ENCODE measurements at regions of chr6 and their contacts with region 1.

Region 1: DNA sequence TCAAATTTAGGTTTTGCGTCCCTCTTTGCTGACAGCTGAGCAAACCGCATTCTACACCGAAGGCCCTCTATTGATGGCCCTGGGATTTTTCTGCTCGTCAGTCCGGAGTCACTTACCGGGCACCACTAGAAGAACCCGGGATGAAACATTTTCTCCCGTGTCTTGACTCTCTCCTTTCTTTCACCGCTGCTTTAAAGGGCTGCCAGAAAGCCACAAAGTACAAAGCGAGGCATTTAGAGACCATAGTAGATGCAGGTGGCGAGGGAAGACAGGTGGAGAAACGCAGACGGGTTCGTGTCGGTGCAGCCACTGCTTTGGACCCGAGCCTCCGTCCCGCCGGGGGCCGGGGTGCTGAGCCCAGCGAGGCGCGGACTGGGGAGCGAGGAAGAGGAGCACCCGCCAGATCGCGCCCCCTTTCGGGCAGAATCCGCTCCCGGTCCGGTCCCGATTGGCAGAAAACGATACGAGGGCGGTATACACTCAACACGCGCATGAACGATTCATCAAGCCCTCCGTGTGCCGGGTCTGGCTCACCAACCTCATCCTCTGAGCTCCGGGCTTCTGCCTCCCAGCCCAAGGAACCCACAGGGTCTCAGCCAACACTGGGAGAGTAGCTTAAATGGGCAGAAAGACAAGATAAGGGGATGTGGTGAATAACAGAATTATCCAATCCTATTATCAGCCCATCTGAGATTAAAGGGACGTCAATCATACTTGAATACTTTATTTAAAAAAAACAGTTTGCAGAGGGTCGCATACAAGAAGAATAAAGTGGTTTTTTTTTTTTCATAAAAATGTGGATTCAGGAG is 84.9 kb downstream of the TRIM27 start:
- DNase-seq: peak; percentile 73 to 96 (median 88)

Region 2: DNA sequence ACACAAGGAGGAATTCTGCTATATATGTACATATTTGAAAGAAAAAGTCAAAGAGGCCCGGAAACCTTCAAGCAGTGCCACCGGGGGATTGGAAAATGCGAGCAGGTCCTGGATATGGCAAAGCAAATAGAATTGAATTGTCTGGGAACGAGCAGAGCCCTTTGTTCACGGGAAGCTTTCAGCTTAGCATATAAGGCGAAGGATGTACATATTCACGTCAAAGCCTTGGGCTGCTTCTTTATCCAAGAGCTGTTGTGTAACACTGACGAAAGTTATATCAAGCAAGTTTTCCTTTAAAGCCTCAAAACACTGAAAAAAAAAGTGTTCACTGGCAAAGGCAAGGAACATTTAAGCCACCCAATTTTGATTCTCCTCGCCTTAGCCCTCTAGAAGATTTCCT is 142.2 kb before region 1 on chr6:
- intact Hi-C with region 1: no loop called
- DNase-seq: no peak

Region 3: GRCh38 chr6:28863604-28864320 is 24.9 kb after region 1 on chr6:
- intact Hi-C with region 1: loop called (anchors 2 kb)
- DNase-seq: peak; percentile 59 to 93 (median 84)

Region 4: GRCh38 chr6:28940858-28941680 is 102.2 kb after region 1 on chr6:
- intact Hi-C with region 1: loop called (anchors 5 kb)
- DNase-seq: peak; percentile 49 to 94 (median 77)

Region 5: GRCh38 chr6:28981833-28982475 is 143.1 kb after region 1 on chr6:
- intact Hi-C with region 1: loop called (anchors 2 kb)
- DNase-seq: peak; percentile 21 to 91 (median 73)

Region 6: DNA sequence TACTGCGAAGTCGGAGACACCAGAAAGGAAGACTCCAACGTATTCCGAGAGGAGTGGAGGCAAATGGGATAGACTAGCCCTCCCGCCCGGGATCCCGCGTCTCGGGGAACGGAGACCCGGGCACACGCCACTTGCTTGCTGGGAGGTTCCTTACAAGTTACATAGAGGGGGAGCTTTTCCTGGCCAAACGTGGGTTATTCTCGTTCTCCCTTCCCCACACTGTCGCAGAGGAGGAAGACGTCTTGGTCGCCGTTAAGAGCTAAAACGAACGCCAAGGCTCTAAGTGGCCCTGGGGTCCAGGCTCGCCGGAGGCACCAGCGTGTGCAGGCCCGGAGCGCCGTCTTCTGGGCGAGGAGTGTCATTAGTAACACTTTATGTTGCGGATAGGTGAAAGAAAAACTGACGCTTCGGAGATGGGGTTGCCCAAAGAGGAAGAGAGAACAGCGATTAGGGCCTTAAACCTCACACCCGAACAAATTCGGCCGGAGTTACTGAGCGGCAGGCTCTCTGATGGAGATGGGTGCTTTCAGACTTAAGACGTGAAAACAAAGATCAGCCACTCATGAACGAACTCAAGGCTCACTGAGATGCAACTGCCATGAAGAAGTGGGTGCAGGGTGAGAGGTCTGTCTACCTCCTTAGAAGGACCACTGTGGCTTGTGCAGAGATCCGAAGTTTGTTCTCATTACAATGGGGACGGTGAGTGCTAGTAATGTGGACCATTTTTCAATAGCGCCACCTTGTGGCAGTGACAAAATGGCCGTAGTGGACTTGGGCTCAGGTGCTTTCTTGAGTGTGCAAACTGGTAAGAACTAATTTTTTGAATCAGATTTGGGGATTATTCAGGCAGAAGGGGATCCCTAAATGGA is 178.0 kb after region 1 on chr6:
- intact Hi-C with region 1: loop called (anchors 5 kb)
- DNase-seq: peak; percentile 40 to 93 (median 82)

Measured in head of caudate nucleus (tissue), 42 donors.